SK-N-SH (cell line): ENCODE measurements at regions of chr6 and their contacts with region 1.

Region 1: GRCh38 chr6:131627724-131628682 is at the start of gene MED23:
- DNase-seq: peak; percentile 88
- H3K4me3 ChIP-seq: peak within 1 kb of the TSS; percentile 85 to 96
- H3K27ac ChIP-seq: peak within 1 kb of the TSS; percentile 47 to 82; a peak in 3 of 4 replicates
- H3K4me1 ChIP-seq: peaks cover 0 to 9% of the 10 kb centered on the region in 2 experiments; a peak in 2 of 4 replicates
- H3K27me3 ChIP-seq: no peaks in the 10 kb centered on the region; the same call in 1 of the 2 replicates
- CTCF ChIP-seq: peak; percentile 98
- EP300 ChIP-seq: peak in 1 of 2 experiments; percentile 64; a peak in 1 of 4 replicates
- RAD21 ChIP-seq: peak; percentile 74
- polyA plus RNA-seq, gene MED23: 10.1 and 14.5 TPM in 2 replicates

Region 2: DNA sequence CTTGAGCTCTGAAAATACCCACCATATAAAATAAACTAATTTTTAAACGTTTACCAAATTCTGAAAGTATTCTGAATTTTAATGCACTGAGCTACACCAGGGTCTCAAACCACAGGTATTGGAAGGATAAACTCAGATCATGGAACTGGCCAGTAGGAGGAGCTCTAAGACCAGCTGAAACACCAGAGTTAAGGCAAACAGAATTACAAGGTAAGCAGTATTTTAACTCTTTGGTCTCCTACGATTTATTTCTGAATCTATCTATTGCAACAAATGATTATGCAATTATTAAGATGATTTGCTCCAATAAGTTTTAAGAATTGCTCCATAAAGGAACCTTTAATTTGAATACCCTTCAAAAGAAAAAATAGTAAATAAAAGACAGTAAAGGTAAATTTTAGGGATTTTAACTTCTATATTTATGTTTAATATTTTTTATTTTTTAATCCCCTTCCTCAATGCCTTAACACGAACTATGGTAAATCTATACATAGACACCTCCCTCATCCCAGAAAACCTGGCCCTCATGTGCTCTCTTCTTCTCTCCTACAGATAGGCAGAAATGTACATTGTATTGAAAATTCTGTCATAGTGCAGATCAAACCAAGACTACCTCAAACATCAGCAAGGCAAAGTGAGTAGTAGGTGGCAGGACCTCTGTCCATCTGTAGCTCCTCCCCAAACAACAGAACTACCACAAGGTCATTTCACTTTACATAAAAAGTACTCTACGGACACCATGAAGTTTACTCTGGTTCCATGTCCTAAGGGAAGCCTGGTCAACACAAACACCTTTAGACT is 742.4 kb before region 1 on chr6:
- CTCF ChIA-PET with region 1: interaction called, 18 read pairs
- POLR2A ChIA-PET with region 1: interaction called, 3 read pairs
- DNase-seq: peak; percentile 45
- H3K4me3 ChIP-seq: no peak overlapping the region
- H3K27ac ChIP-seq: no peak overlapping the region
- H3K4me1 ChIP-seq: no peaks in the 10 kb centered on the region; a peak in 1 of 4 replicates
- H3K27me3 ChIP-seq: peaks cover 9% of the 10 kb centered on the region; the same call in 1 of the 2 replicates
- CTCF ChIP-seq: peak; percentile 96
- EP300 ChIP-seq: no peak
- RAD21 ChIP-seq: peak; percentile 94

Region 3: GRCh38 chr6:131519670-131520436 is 108.2 kb before region 1 on chr6:
- CTCF ChIA-PET with region 1: interaction called, 20 read pairs
- POLR2A ChIA-PET with region 1: no interaction called
- DNase-seq: peak; percentile 21
- H3K4me3 ChIP-seq: no peak overlapping the region
- H3K27ac ChIP-seq: no peak overlapping the region
- H3K4me1 ChIP-seq: no peaks in the 10 kb centered on the region
- H3K27me3 ChIP-seq: no peaks in the 10 kb centered on the region
- CTCF ChIP-seq: peak; percentile 59
- EP300 ChIP-seq: no peak
- RAD21 ChIP-seq: peak; percentile 63

Region 4: GRCh38 chr6:131597446-131597845 is 30.6 kb before region 1 on chr6:
- CTCF ChIA-PET with region 1: interaction called, 17 read pairs
- POLR2A ChIA-PET with region 1: no interaction called
- DNase-seq: peak; percentile 3
- H3K4me3 ChIP-seq: no peak overlapping the region
- H3K27ac ChIP-seq: no peak overlapping the region
- H3K4me1 ChIP-seq: no peaks in the 10 kb centered on the region
- H3K27me3 ChIP-seq: no peaks in the 10 kb centered on the region
- CTCF ChIP-seq: peak; percentile 52
- EP300 ChIP-seq: no peak
- RAD21 ChIP-seq: peak; percentile 15; the same call in 1 of the 2 replicates

Region 5: DNA sequence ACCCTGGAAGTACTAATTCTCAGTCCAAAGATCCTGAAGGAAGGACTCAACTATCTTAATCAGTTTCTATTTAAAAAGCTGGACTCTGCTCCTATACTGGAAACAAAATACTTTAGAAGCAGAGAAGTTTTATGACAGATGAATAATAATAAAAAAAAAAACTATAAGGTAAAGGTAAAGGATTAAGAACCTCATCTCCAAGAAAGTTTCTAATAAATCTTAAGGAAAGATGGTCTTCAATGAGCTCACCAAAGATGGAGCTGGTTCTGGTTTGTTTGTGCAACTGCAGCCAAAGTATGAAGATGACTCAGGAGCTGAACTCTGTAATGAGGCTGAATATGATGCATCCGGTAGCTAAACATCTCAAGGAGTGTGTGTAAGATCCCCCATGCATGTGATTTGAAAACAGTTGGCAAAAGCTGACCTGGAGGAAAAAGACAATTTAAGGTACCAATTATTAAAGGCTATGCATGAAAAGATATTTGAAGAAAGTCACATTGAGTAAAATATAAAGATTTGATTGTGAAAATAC is 25.2 kb before region 1 on chr6:
- CTCF ChIA-PET with region 1: interaction called, 20 read pairs
- POLR2A ChIA-PET with region 1: no interaction called
- DNase-seq: no peak
- H3K4me3 ChIP-seq: no peak overlapping the region
- H3K27ac ChIP-seq: peak overlapping the region in 1 of 2 experiments; percentile 9; a peak in 2 of 4 replicates
- H3K4me1 ChIP-seq: no peaks in the 10 kb centered on the region
- H3K27me3 ChIP-seq: no peaks in the 10 kb centered on the region
- CTCF ChIP-seq: no peak
- EP300 ChIP-seq: no peak
- RAD21 ChIP-seq: no peak

Region 6: DNA sequence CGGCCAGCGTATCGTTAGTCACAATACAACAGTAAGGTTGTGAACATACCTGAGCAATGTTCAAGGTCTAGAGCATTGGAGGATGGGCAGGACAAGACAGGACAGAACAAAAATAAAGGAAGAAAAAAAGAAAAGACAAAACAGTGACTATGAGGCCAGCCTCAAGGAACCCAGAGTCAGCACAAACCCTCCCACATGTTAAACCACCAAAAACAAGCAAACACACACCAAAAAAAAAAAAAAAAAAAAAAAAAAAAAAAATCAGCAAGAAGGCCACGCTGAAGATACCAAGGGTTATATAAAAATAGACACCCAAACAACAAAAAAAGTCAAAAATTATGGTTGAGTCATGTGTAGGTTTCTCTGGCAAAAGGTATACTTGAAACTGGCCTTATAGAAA is 12.7 kb before region 1 on chr6:
- CTCF ChIA-PET with region 1: interaction called, 60 read pairs
- POLR2A ChIA-PET with region 1: interaction called, 3 read pairs
- DNase-seq: no peak
- H3K4me3 ChIP-seq: no peak overlapping the region
- H3K27ac ChIP-seq: no peak overlapping the region
- H3K4me1 ChIP-seq: no peaks in the 10 kb centered on the region
- H3K27me3 ChIP-seq: no peaks in the 10 kb centered on the region
- CTCF ChIP-seq: no peak
- EP300 ChIP-seq: no peak
- RAD21 ChIP-seq: no peak

Region 7: GRCh38 chr6:131694831-131695426 is 66.9 kb after region 1 on chr6:
- CTCF ChIA-PET with region 1: interaction called, 12 read pairs
- POLR2A ChIA-PET with region 1: no interaction called
- DNase-seq: peak; percentile 60
- H3K4me3 ChIP-seq: peak overlapping the region in 1 of 2 experiments; percentile 46; a peak in 1 of 4 replicates
- H3K27ac ChIP-seq: no peak overlapping the region
- H3K4me1 ChIP-seq: no peaks in the 10 kb centered on the region
- H3K27me3 ChIP-seq: peaks cover 12% of the 10 kb centered on the region; the same call in 1 of the 2 replicates
- CTCF ChIP-seq: peak; percentile 74
- EP300 ChIP-seq: no peak
- RAD21 ChIP-seq: peak; percentile 72

Region 8: DNA sequence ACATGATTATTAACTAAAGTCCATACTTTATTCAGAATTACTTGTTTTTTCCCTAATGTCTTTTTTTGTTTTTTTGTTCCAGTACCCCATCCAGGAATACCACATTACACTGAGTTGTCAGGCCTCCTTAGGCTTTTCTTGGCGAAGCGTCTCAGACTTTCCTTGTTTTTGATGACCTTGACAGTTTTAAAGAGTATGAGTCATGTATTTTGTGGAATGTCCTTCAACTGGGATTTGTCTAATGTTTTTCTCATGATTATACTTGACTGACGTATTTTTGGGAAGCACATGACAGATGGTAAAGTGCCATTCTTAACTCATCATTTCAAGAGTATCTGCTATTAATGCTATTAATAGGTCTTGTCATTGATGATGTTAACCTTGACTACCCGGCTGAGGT is 203.4 kb after region 1 on chr6:
- CTCF ChIA-PET with region 1: no interaction called
- POLR2A ChIA-PET with region 1: no interaction called
- DNase-seq: no peak
- H3K4me3 ChIP-seq: no peak overlapping the region
- H3K27ac ChIP-seq: no peak overlapping the region
- H3K4me1 ChIP-seq: no peaks in the 10 kb centered on the region
- H3K27me3 ChIP-seq: peaks cover 2% of the 10 kb centered on the region; the same call in 1 of the 2 replicates
- CTCF ChIP-seq: no peak
- EP300 ChIP-seq: no peak
- RAD21 ChIP-seq: no peak